ENCODE measurements at regions of chr20 and their contacts with region 1.

Region 1: GRCh38 chr20:36773597-36774390 is at the start of gene DSN1:
- DNase-seq: peak; percentile 98
- ATAC-seq: peak; percentile 94
- H3K4me3 Mint-ChIP-seq: peak within 1 kb of the TSS; percentile 94
- H3K27ac Mint-ChIP-seq: peak within 1 kb of the TSS; percentile 96
- H3K4me1 Mint-ChIP-seq: peaks cover 41% of the 10 kb centered on the region
- H3K27me3 Mint-ChIP-seq: peaks cover 2% of the 10 kb centered on the region
- total RNA-seq, gene DSN1: 40.2 to 41.8 TPM

Region 2: GRCh38 chr20:36886859-36887751 is 113.3 kb after region 1 on chr20:
- CTCF ChIA-PET with region 1: interaction called, 10 read pairs
- POLR2A ChIA-PET with region 1: no interaction called
- DNase-seq: peak; percentile 86
- ATAC-seq: peak; percentile 84
- H3K4me3 Mint-ChIP-seq: no peak overlapping the region
- H3K27ac Mint-ChIP-seq: peak overlapping the region; percentile 64
- H3K4me1 Mint-ChIP-seq: peaks cover 12% of the 10 kb centered on the region
- H3K27me3 Mint-ChIP-seq: no peaks in the 10 kb centered on the region

Region 3: GRCh38 chr20:36908603-36909002 is 134.8 kb after region 1 on chr20:
- CTCF ChIA-PET with region 1: no interaction called
- POLR2A ChIA-PET with region 1: no interaction called
- DNase-seq: no peak
- ATAC-seq: no peak
- H3K4me3 Mint-ChIP-seq: no peak overlapping the region
- H3K27ac Mint-ChIP-seq: no peak overlapping the region
- H3K4me1 Mint-ChIP-seq: peaks cover 28% of the 10 kb centered on the region
- H3K27me3 Mint-ChIP-seq: no peaks in the 10 kb centered on the region

Region 4: DNA sequence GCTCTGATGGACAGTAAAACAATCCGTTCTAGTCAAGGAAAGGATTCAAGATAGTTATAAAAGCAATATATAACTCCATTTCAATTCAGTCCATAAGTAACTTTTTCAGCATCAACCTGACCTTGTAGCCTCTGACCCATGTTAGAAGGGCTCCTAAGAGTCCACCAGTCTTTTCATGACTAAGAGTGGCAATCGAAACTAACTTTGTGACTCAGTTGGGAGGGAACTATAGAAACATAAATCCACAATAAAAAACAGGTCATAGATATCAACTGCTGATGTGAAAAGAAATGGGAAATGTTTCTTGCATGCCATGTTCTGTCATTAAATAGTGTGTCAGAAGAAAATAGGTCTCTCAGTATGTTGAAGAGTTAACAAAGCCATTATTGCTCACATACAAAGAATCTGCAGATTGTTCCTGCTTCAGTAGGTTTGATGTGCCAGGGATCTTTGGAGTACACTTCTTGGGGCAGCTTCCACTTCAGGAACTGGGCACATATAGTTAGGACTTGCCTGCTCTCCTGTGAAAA is 338.2 kb after region 1 on chr20:
- CTCF ChIA-PET with region 1: no interaction called
- POLR2A ChIA-PET with region 1: no interaction called
- DNase-seq: no peak
- ATAC-seq: no peak
- H3K4me3 Mint-ChIP-seq: no peak overlapping the region
- H3K27ac Mint-ChIP-seq: no peak overlapping the region
- H3K4me1 Mint-ChIP-seq: no peaks in the 10 kb centered on the region
- H3K27me3 Mint-ChIP-seq: no peaks in the 10 kb centered on the region